ENCODE measurements at regions of chr2 and their contacts with region 1.

Region 1: DNA sequence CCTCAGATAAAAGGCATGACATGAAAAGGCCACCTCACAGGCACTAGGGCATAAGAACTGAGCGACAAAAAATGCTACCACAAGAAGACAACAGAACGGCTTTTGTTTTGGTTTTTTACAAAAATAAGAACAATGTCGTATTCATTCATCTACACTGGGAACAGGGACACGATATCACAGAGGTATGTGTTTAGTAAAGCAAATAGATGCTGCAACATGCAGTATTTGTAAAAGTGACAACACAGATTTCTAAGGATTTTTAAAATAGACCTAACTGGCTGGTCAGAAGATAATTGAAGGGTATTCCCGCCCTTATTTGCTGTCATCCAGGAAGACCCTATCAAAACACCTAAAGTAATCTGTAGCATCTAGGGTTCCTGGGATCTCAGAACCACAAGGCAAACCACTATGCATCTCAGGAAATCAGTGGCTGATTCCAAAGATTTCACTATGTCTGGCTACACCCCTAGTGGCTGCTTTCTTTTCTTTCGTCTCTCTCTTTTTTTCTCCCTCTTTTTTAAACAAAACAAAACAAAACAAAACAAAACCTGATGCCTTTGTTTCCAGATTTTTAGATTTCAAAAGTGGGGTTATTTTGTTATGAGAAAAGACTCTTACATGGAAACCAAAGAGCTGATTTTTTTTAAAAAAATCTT is 97.2 kb downstream of the BCL11A start:
- DNase-seq: no peak
- ATAC-seq: no peak
- H3K4me3 ChIP-seq: no peak overlapping the region
- H3K27ac ChIP-seq: no peak overlapping the region
- H3K4me1 ChIP-seq: peaks cover 0 to 9% (median 0%) of the 10 kb centered on the region in 9 donors
- H3K27me3 ChIP-seq: no peaks in the 10 kb centered on the region
- CTCF ChIP-seq: no peak

Region 2: GRCh38 chr2:59150217-59150849 is 1305.9 kb before region 1 on chr2:
- intact Hi-C with region 1: no loop called
- DNase-seq: no peak
- ATAC-seq: no peak
- H3K4me3 ChIP-seq: no peak overlapping the region
- H3K27ac ChIP-seq: no peak overlapping the region
- H3K4me1 ChIP-seq: no peaks in the 10 kb centered on the region
- H3K27me3 ChIP-seq: peaks cover 0 to 4% (median 0%) of the 10 kb centered on the region in 7 donors
- CTCF ChIP-seq: no peak

Region 3: GRCh38 chr2:59874971-59875755 is 581.1 kb before region 1 on chr2:
- intact Hi-C with region 1: loop called in 1 of 10 experiments (anchors 10 kb)
- DNase-seq: no peak
- ATAC-seq: no peak
- H3K4me3 ChIP-seq: no peak overlapping the region
- H3K27ac ChIP-seq: no peak overlapping the region
- H3K4me1 ChIP-seq: no peaks in the 10 kb centered on the region
- H3K27me3 ChIP-seq: no peaks in the 10 kb centered on the region
- CTCF ChIP-seq: no peak

Region 4: GRCh38 chr2:60213865-60214625 is 242.2 kb before region 1 on chr2:
- intact Hi-C with region 1: no loop called
- DNase-seq: peak in 1 of 2 donors; percentile 18
- ATAC-seq: peak in 7 of 8 donors; percentile 29 to 91 (median 61)
- H3K4me3 ChIP-seq: no peak overlapping the region
- H3K27ac ChIP-seq: no peak overlapping the region
- H3K4me1 ChIP-seq: peaks cover 0 to 23% (median 11%) of the 10 kb centered on the region in 9 donors
- H3K27me3 ChIP-seq: no peaks in the 10 kb centered on the region
- CTCF ChIP-seq: no peak

Region 5: DNA sequence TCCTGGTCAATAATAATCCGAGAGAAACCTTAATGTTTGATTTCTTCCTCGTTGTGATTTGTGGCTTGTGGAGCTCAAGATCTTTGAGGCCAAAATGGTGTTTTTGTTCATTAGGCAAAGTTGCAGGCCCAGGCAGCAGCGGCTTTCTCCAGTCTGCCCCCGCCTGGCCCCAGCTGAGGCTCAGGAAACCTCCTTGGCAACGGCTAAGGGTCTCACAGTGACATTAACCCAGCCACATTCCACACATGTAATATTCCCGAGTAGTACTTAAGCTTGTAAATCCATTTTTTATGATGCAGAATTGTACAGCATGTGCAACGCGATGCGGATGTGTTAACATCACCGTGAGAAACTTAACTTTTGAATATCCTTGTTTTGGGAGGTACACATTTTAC is 102.8 kb before region 1 on chr2:
- intact Hi-C with region 1: no loop called
- DNase-seq: no peak
- ATAC-seq: no peak
- H3K4me3 ChIP-seq: no peak overlapping the region
- H3K27ac ChIP-seq: no peak overlapping the region
- H3K4me1 ChIP-seq: peaks cover 0 to 6% (median 0%) of the 10 kb centered on the region in 9 donors
- H3K27me3 ChIP-seq: no peaks in the 10 kb centered on the region
- CTCF ChIP-seq: no peak